ENCODE measurements at regions of chr1 and their contacts with region 1.

Region 1: GRCh38 chr1:160006312-160006940 is 25.4 kb downstream of the PIGM start:
- DNase-seq: peak; percentile 82
- H3K4me3 Mint-ChIP-seq: no peak overlapping the region
- H3K27ac Mint-ChIP-seq: no peak overlapping the region
- H3K4me1 Mint-ChIP-seq: no peaks in the 10 kb centered on the region
- H3K27me3 Mint-ChIP-seq: peaks cover 2% of the 10 kb centered on the region

Region 2: GRCh38 chr1:158527190-158527815 is 1479.1 kb before region 1 on chr1:
- CTCF ChIA-PET with region 1: no interaction called
- POLR2A ChIA-PET with region 1: no interaction called
- intact Hi-C with region 1: no loop called
- DNase-seq: no peak
- H3K4me3 Mint-ChIP-seq: no peak overlapping the region
- H3K27ac Mint-ChIP-seq: no peak overlapping the region
- H3K4me1 Mint-ChIP-seq: no peaks in the 10 kb centered on the region
- H3K27me3 Mint-ChIP-seq: peaks cover 12% of the 10 kb centered on the region

Region 3: GRCh38 chr1:159780583-159781582 is 225.5 kb before region 1 on chr1 and contains the start of gene DUSP23:
- CTCF ChIA-PET with region 1: interaction called, 5 read pairs
- POLR2A ChIA-PET with region 1: no interaction called
- intact Hi-C with region 1: loop called (anchors 1 kb)
- DNase-seq: peak; percentile 98
- H3K4me3 Mint-ChIP-seq: peak within 1 kb of the TSS; percentile 78
- H3K27ac Mint-ChIP-seq: peak within 1 kb of the TSS; percentile 25
- H3K4me1 Mint-ChIP-seq: peaks cover 5% of the 10 kb centered on the region
- H3K27me3 Mint-ChIP-seq: no peaks in the 10 kb centered on the region
- total RNA-seq, gene DUSP23: 26.9 to 28.3 TPM

Region 4: GRCh38 chr1:159924981-159925712 is 81.3 kb before region 1 on chr1 and contains the start of gene TAGLN2:
- CTCF ChIA-PET with region 1: interaction called, 311 read pairs
- POLR2A ChIA-PET with region 1: interaction called, 3 read pairs
- intact Hi-C with region 1: no loop called
- DNase-seq: peak; percentile 93
- H3K4me3 Mint-ChIP-seq: peak within 1 kb of the TSS; percentile 93
- H3K27ac Mint-ChIP-seq: peak within 1 kb of the TSS; percentile 98
- H3K4me1 Mint-ChIP-seq: peaks cover 38% of the 10 kb centered on the region
- H3K27me3 Mint-ChIP-seq: no peaks in the 10 kb centered on the region
- total RNA-seq, gene TAGLN2: 597 to 607 TPM

Region 5: DNA sequence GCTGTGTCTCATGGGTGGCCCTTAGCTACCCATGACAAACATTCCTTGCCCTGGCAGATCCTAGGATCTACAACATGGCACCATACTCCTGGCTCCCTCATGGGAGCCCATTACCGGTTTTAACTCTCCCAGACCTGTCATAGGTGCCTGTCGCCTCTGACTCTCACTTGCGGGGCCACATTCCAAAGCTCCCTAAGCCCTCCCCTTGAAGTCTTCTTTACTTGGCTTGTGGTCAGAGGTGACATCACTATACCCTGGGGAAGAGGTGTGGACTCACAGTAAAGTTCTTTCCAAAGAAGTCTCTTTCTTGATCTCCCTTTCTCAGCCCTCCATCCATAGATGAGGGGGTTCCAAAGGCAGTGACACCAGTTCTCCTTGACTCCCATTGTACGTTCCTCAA is 47.0 kb before region 1 on chr1:
- CTCF ChIA-PET with region 1: interaction called, 34 read pairs
- POLR2A ChIA-PET with region 1: no interaction called
- intact Hi-C with region 1: no loop called
- DNase-seq: no peak
- H3K4me3 Mint-ChIP-seq: no peak overlapping the region
- H3K27ac Mint-ChIP-seq: no peak overlapping the region
- H3K4me1 Mint-ChIP-seq: peaks cover 11% of the 10 kb centered on the region
- H3K27me3 Mint-ChIP-seq: peaks cover 10% of the 10 kb centered on the region

Region 6: GRCh38 chr1:160018900-160019299 is 12.5 kb after region 1 on chr1:
- CTCF ChIA-PET with region 1: interaction called, 78 read pairs
- POLR2A ChIA-PET with region 1: interaction called, 4 read pairs
- intact Hi-C with region 1: no loop called
- DNase-seq: peak; percentile 40
- H3K4me3 Mint-ChIP-seq: no peak overlapping the region
- H3K27ac Mint-ChIP-seq: peak overlapping the region; percentile 44
- H3K4me1 Mint-ChIP-seq: peaks cover 9% of the 10 kb centered on the region
- H3K27me3 Mint-ChIP-seq: peaks cover 8% of the 10 kb centered on the region

Region 7: DNA sequence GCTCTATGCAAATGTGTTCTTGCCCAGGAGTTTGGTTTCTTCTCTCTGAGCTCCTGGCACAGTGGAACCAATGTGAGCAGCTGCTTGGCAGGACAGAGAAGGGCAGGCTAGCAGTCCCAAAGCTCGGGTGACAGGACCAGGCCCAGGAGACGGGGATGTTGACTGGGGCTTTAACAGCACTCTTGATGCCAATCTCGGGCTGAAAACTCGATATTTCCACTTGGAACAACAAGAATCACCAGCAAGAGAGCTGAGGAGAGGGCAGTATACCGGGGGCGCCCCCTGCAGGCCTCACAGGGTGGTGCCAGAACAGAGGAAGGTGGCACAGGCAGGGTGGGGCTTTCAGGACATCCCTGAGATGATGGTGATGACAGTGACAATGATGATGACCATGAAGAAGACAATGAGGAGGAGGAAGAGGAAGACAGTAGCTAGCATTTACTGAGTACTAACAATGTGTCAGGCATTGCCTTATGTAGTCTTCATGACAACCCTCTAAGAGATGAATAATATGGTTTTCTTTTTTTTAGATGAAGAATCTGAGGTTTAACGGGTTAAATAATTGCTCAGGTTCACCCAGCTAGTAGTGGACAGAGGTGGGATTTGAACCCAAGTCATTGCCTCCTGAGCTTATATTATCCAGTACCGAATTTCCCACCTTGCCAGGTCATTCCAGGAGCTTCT is 72.2 kb after region 1 on chr1:
- CTCF ChIA-PET with region 1: interaction called, 10 read pairs
- POLR2A ChIA-PET with region 1: no interaction called
- intact Hi-C with region 1: no loop called
- DNase-seq: peak; percentile 84
- H3K4me3 Mint-ChIP-seq: no peak overlapping the region
- H3K27ac Mint-ChIP-seq: no peak overlapping the region
- H3K4me1 Mint-ChIP-seq: peaks cover 12% of the 10 kb centered on the region
- H3K27me3 Mint-ChIP-seq: peaks cover 51% of the 10 kb centered on the region

Measured in activated CD4-positive, alpha-beta memory T cell treated with anti-CD3 and anti-CD28 coated beads for 36 hours (primary cell).